Posterior vena cava (tissue), 2 donors: ENCODE measurements at regions of chr10 and their contacts with region 1.

Region 1: GRCh38 chr10:7444551-7445121 is 33.8 kb upstream of the SFMBT2 start:
- DNase-seq: no peak

Region 2: GRCh38 chr10:7424315-7424714 is 20.3 kb before region 1 on chr10:
- intact Hi-C with region 1: no loop called
- DNase-seq: peak; percentile 62

Region 3: DNA sequence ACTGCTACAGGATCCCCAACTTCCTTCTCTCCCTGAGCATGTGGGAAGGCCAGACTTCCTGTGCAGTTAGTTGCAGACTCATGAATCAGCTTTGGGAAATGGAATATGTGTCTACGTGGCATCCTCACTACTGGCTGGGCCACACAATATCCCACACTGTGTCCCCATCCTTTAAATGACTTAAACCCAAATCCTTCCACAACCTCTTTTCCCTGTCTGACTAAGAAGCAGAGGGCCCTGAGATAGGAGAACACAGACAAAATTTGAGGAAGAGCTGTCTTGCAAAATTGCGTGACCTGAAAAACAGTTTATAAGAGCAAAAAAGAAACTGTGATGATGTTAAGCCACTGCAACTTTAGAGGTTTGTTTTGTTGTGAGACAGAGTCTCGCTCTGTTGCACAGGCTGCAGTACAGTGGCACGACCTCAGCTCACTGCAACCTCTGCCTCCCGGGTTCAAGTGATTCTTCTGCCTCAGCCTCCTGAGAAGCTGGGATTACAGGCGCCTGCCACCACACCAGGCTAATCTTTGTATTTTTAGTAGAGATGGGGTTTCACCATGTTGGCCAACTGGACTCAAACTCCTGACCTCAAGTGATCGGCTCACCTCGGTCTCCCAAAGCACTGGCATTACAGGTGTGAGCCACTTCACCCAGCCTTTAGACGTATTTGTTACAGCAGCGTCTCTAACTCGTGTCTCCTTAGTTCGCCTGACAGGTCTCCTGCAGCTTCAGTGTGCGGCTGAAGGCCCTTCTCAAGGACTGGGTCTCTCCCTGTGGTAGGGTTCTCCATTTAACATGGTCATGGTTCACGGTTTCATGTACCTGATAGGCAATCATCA is 13.1 kb after region 1 on chr10:
- intact Hi-C with region 1: no loop called
- DNase-seq: no peak

Region 4: GRCh38 chr10:8652395-8652794 is 1207.8 kb after region 1 on chr10:
- intact Hi-C with region 1: loop called in 1 of 2 experiments (anchors 5 kb)
- DNase-seq: no peak